CD8-positive, alpha-beta T cell (primary cell): ENCODE measurements at regions of chr1 and their contacts with region 1.

Region 1: GRCh38 chr1:151098126-151098525 is 27.6 kb downstream of the GABPB2 start:
- DNase-seq: no peak
- ATAC-seq: no peak
- H3K4me3 ChIP-seq: no peak overlapping the region
- H3K4me3 Mint-ChIP-seq: no peak overlapping the region
- H3K27ac ChIP-seq: no peak overlapping the region
- H3K27ac Mint-ChIP-seq: no peak overlapping the region
- H3K4me1 ChIP-seq: no peaks in the 10 kb centered on the region
- H3K4me1 Mint-ChIP-seq: no peaks in the 10 kb centered on the region
- H3K27me3 ChIP-seq: no peaks in the 10 kb centered on the region
- H3K27me3 Mint-ChIP-seq: no peaks in the 10 kb centered on the region
- CTCF ChIP-seq: no peak

Region 2: GRCh38 chr1:151085953-151086559 is 12.1 kb before region 1 on chr1:
- CTCF ChIA-PET with region 1: interaction called, 24 read pairs
- POLR2A ChIA-PET with region 1: interaction called, 3 read pairs
- intact Hi-C with region 1: no loop called
- DNase-seq: no peak
- ATAC-seq: no peak
- H3K4me3 ChIP-seq: no peak overlapping the region
- H3K4me3 Mint-ChIP-seq: no peak overlapping the region
- H3K27ac ChIP-seq: no peak overlapping the region
- H3K27ac Mint-ChIP-seq: no peak overlapping the region
- H3K4me1 ChIP-seq: no peaks in the 10 kb centered on the region
- H3K4me1 Mint-ChIP-seq: no peaks in the 10 kb centered on the region
- H3K27me3 ChIP-seq: no peaks in the 10 kb centered on the region
- H3K27me3 Mint-ChIP-seq: no peaks in the 10 kb centered on the region
- CTCF ChIP-seq: no peak

Region 3: DNA sequence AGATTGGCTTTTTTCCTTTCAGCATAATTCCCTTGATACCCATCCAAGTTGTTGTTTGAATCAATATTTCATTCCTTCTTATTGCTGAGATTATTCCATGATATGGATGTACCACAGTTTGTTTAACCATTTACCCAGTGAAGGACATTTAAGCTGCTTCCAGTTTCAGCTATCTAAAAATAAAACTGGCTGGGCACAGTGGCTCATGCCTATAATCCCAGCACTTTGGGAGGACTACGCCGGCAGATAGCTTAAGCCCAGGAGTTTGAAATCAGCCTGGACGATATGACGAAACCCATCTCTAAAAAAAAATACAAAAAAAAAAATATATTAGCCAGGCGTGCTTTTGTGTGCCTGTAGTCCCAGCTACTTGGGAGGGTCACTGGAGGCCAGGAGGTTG is 15.8 kb after region 1 on chr1:
- CTCF ChIA-PET with region 1: interaction called, 11 read pairs
- POLR2A ChIA-PET with region 1: interaction called, 3 read pairs
- intact Hi-C with region 1: no loop called
- DNase-seq: peak in 1 of 9 experiments; percentile 1
- ATAC-seq: no peak
- H3K4me3 ChIP-seq: no peak overlapping the region
- H3K4me3 Mint-ChIP-seq: no peak overlapping the region
- H3K27ac ChIP-seq: no peak overlapping the region
- H3K27ac Mint-ChIP-seq: no peak overlapping the region
- H3K4me1 ChIP-seq: no peaks in the 10 kb centered on the region
- H3K4me1 Mint-ChIP-seq: no peaks in the 10 kb centered on the region
- H3K27me3 ChIP-seq: no peaks in the 10 kb centered on the region
- H3K27me3 Mint-ChIP-seq: no peaks in the 10 kb centered on the region
- CTCF ChIP-seq: no peak

Region 4: GRCh38 chr1:151130987-151131586 is 33.0 kb after region 1 on chr1:
- CTCF ChIA-PET with region 1: interaction called, 10 read pairs
- POLR2A ChIA-PET with region 1: interaction called, 8 read pairs
- intact Hi-C with region 1: no loop called
- DNase-seq: peak; percentile 61 to 92 (median 80)
- ATAC-seq: peak; percentile 100
- H3K4me3 ChIP-seq: peak overlapping the region; percentile 40 to 51
- H3K4me3 Mint-ChIP-seq: peak overlapping the region; percentile 82
- H3K27ac ChIP-seq: peak overlapping the region in 1 of 2 experiments; percentile 41
- H3K27ac Mint-ChIP-seq: peak overlapping the region; percentile 90
- H3K4me1 ChIP-seq: peaks cover 10% of the 10 kb centered on the region
- H3K4me1 Mint-ChIP-seq: peaks cover 12% of the 10 kb centered on the region
- H3K27me3 ChIP-seq: no peaks in the 10 kb centered on the region
- H3K27me3 Mint-ChIP-seq: no peaks in the 10 kb centered on the region
- CTCF ChIP-seq: no peak

Region 5: DNA sequence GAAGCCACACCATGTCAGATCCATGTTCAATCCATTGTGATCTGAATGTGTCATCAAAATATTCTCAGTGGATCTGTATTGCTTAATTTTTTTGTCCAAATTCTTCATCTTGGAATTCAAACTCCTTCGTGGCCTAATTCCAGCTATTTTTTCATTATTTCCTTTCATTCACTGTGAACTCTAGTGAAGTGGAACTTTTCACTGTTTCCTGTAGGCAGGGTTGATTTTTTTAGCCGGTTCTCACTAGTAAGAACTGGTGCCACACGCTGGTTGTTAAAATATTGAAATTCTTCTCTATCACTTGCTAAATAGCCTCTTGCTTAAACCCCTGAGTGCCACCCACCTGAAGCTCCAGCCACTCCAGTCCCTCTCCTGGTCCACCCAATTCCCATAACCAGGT is 946.3 kb after region 1 on chr1:
- CTCF ChIA-PET with region 1: no interaction called
- POLR2A ChIA-PET with region 1: no interaction called
- intact Hi-C with region 1: no loop called
- DNase-seq: no peak
- ATAC-seq: no peak
- H3K4me3 ChIP-seq: no peak overlapping the region
- H3K4me3 Mint-ChIP-seq: no peak overlapping the region
- H3K27ac ChIP-seq: no peak overlapping the region
- H3K27ac Mint-ChIP-seq: no peak overlapping the region
- H3K4me1 ChIP-seq: peaks cover 20% of the 10 kb centered on the region
- H3K4me1 Mint-ChIP-seq: peaks cover 15% of the 10 kb centered on the region
- H3K27me3 ChIP-seq: no peaks in the 10 kb centered on the region
- H3K27me3 Mint-ChIP-seq: no peaks in the 10 kb centered on the region
- CTCF ChIP-seq: no peak